GM12878 (cell line): ENCODE measurements at regions of chr18 and their contacts with region 1.

Region 1: GRCh38 chr18:36333414-36333813 is 35.9 kb downstream of the FHOD3 start:
- DNase-seq: no peak
- ATAC-seq: peak; percentile 26
- H3K4me3 ChIP-seq: no peak overlapping the region
- H3K27ac ChIP-seq: no peak overlapping the region
- H3K4me1 ChIP-seq: peaks cover 10% of the 10 kb centered on the region
- H3K27me3 ChIP-seq: no peaks in the 10 kb centered on the region
- CTCF ChIP-seq: no peak
- EP300 ChIP-seq: no peak
- POLR2A ChIP-seq: no peak
- RAD21 ChIP-seq: no peak

Region 2: DNA sequence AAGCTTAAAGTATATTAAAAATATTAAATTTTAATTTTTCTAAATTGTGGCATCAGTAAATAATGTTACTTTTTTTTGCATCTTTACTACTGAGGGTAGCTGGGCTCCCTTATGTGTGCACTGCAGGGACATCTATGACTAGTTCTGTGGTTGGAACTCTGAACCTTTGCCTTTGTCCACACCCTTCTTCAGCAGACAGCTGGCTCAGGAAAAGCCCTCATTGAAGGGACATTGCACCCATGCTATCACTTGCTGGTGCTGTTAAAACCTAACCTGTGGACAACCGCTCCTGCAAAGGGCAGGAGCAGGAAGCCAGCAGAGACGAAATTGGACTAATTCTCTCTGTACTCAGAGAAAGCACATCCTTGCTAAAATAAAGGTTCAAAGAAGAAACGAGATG is 116.1 kb before region 1 on chr18:
- CTCF ChIA-PET with region 1: no interaction called
- POLR2A ChIA-PET with region 1: no interaction called
- RAD21 ChIA-PET with region 1: no interaction called
- SMC1A ChIA-PET with region 1: no interaction called
- in situ Hi-C with region 1: no loop called
- intact Hi-C with region 1: no loop called
- DNase-seq: no peak
- ATAC-seq: no peak
- H3K4me3 ChIP-seq: no peak overlapping the region
- H3K27ac ChIP-seq: no peak overlapping the region
- H3K4me1 ChIP-seq: no peaks in the 10 kb centered on the region
- H3K27me3 ChIP-seq: no peaks in the 10 kb centered on the region
- CTCF ChIP-seq: no peak
- EP300 ChIP-seq: no peak
- POLR2A ChIP-seq: no peak
- RAD21 ChIP-seq: no peak

Region 3: GRCh38 chr18:36302676-36303075 is 30.7 kb before region 1 on chr18:
- CTCF ChIA-PET with region 1: interaction called, 10 read pairs
- POLR2A ChIA-PET with region 1: interaction called, 11 read pairs
- RAD21 ChIA-PET with region 1: interaction called, 126 read pairs
- SMC1A ChIA-PET with region 1: interaction called, 125 read pairs
- in situ Hi-C with region 1: no loop called
- intact Hi-C with region 1: no loop called
- DNase-seq: no peak
- ATAC-seq: no peak
- H3K4me3 ChIP-seq: no peak overlapping the region
- H3K27ac ChIP-seq: no peak overlapping the region
- H3K4me1 ChIP-seq: no peaks in the 10 kb centered on the region
- H3K27me3 ChIP-seq: peaks cover 0 to 6% of the 10 kb centered on the region in 2 experiments; a peak in 2 of 4 replicates
- CTCF ChIP-seq: no peak
- EP300 ChIP-seq: no peak
- POLR2A ChIP-seq: no peak
- RAD21 ChIP-seq: no peak

Region 4: GRCh38 chr18:36309436-36310391 is 23.7 kb before region 1 on chr18:
- CTCF ChIA-PET with region 1: interaction called, 4 read pairs
- POLR2A ChIA-PET with region 1: interaction called, 4 read pairs
- RAD21 ChIA-PET with region 1: interaction called, 126 read pairs
- SMC1A ChIA-PET with region 1: interaction called, 125 read pairs
- in situ Hi-C with region 1: no loop called
- intact Hi-C with region 1: no loop called
- DNase-seq: no peak
- ATAC-seq: peak; percentile 34
- H3K4me3 ChIP-seq: no peak overlapping the region
- H3K27ac ChIP-seq: no peak overlapping the region
- H3K4me1 ChIP-seq: no peaks in the 10 kb centered on the region
- H3K27me3 ChIP-seq: 0 out of 4 replicates have a peak, but pooled peaks cover 0 to under 1% of the 10 kb centered on the region in 2 experiments
- CTCF ChIP-seq: no peak
- EP300 ChIP-seq: no peak
- POLR2A ChIP-seq: no peak
- RAD21 ChIP-seq: no peak

Region 5: DNA sequence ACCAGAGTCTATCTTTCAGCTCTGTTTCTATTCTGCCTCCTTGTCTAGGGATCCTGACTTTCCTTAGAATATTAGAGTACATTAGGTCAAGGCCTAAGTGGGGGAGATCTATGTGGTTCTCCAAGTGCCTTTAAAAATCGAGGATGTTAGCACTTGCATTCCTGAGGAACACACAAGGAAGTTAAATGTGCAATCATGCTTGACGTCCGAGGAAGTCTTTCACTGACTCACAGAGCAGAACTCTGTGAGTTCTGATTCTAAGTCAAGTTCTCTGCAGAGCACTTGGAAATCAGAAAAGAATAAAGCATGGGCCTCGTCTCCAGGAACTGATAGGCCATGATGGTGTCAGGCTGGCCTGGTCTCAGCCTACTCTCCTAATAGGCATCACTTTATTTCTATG is 18.7 kb before region 1 on chr18:
- CTCF ChIA-PET with region 1: interaction called, 4 read pairs
- POLR2A ChIA-PET with region 1: interaction called, 3 read pairs
- RAD21 ChIA-PET with region 1: interaction called, 126 read pairs
- SMC1A ChIA-PET with region 1: interaction called, 11 read pairs
- in situ Hi-C with region 1: no loop called
- intact Hi-C with region 1: no loop called
- DNase-seq: no peak
- ATAC-seq: peak; percentile 22
- H3K4me3 ChIP-seq: no peak overlapping the region
- H3K27ac ChIP-seq: no peak overlapping the region
- H3K4me1 ChIP-seq: no peaks in the 10 kb centered on the region
- H3K27me3 ChIP-seq: no peaks in the 10 kb centered on the region
- CTCF ChIP-seq: no peak
- EP300 ChIP-seq: no peak
- POLR2A ChIP-seq: no peak
- RAD21 ChIP-seq: no peak

Region 6: DNA sequence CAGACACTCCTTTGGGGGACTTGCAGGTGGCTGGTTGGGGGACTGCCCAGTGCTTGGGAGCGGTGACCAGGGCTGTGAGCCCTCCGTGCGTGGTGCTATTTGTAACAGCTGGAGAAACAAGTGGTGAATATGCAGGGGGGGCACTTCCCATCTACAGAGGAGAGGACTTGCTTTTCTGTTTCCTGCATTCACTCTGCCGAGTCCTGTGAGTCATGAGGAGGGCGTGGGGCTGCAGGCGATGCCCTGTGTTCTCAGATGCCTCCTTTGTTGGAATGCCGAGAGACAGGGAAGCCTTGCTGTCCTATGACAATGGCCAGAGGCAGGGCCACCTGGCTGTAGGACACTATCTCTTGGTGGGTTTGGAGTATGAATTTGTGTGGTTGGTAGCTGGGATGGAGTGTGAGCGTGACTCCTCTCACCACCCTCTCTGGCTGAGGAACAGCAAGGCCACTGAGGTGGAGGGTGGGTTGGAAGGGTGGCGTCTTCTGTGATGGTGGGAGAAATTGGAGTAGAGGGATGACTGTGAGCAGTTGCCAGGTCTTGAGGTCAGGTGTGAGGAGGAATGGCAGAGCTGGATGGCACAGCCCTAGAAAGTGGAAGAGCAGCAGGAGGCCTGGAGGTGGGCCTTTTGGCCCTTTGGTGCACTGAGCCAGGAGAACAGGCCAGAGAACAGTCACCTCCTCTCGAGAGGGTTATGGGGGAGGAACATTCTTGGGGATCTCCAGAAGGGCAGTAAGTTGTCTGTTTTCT is 11.6 kb before region 1 on chr18:
- CTCF ChIA-PET with region 1: interaction called, 7 read pairs
- POLR2A ChIA-PET with region 1: interaction called, 21 read pairs
- RAD21 ChIA-PET with region 1: interaction called, 10 read pairs
- SMC1A ChIA-PET with region 1: interaction called, 27 read pairs
- in situ Hi-C with region 1: no loop called
- intact Hi-C with region 1: no loop called
- DNase-seq: no peak
- ATAC-seq: peak; percentile 60
- H3K4me3 ChIP-seq: no peak overlapping the region
- H3K27ac ChIP-seq: no peak overlapping the region
- H3K4me1 ChIP-seq: peaks cover 3% of the 10 kb centered on the region; the same call in 1 of the 2 replicates
- H3K27me3 ChIP-seq: peaks cover 0 to 4% of the 10 kb centered on the region in 2 experiments; a peak in 1 of 4 replicates
- CTCF ChIP-seq: no peak
- EP300 ChIP-seq: no peak
- POLR2A ChIP-seq: no peak
- RAD21 ChIP-seq: no peak

Region 7: DNA sequence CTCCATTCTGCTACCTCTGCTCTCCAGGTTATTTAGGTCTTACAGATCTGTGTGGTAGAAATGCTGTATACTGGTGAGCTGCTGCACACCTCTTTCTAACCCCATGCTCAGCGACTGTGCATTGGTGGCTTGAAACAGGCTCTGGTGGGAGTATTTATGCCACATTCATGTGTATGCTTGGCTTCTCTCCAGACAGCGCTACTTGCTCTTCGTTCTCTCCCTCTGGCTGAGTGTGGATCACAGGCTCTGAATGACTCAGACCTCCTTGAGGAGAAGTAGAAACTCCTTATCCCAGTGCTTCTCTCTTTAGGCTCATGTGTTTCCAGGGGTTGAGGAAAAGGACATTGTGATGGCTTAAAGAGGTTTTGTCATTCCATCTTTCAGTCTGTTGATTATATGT is 19.0 kb after region 1 on chr18:
- CTCF ChIA-PET with region 1: interaction called, 11 read pairs
- POLR2A ChIA-PET with region 1: interaction called, 34 read pairs
- RAD21 ChIA-PET with region 1: interaction called, 21 read pairs
- SMC1A ChIA-PET with region 1: interaction called, 28 read pairs
- in situ Hi-C with region 1: no loop called
- intact Hi-C with region 1: no loop called
- DNase-seq: no peak
- ATAC-seq: no peak
- H3K4me3 ChIP-seq: no peak overlapping the region
- H3K27ac ChIP-seq: no peak overlapping the region
- H3K4me1 ChIP-seq: peaks cover 5% of the 10 kb centered on the region; the same call in 1 of the 2 replicates
- H3K27me3 ChIP-seq: no peaks in the 10 kb centered on the region
- CTCF ChIP-seq: no peak
- EP300 ChIP-seq: no peak
- POLR2A ChIP-seq: no peak
- RAD21 ChIP-seq: no peak

Region 8: GRCh38 chr18:36358141-36358540 is 24.7 kb after region 1 on chr18:
- CTCF ChIA-PET with region 1: interaction called, 10 read pairs
- POLR2A ChIA-PET with region 1: interaction called, 9 read pairs
- RAD21 ChIA-PET with region 1: interaction called, 11 read pairs
- SMC1A ChIA-PET with region 1: interaction called, 67 read pairs
- in situ Hi-C with region 1: no loop called
- intact Hi-C with region 1: no loop called
- DNase-seq: no peak
- ATAC-seq: no peak
- H3K4me3 ChIP-seq: no peak overlapping the region
- H3K27ac ChIP-seq: no peak overlapping the region
- H3K4me1 ChIP-seq: peaks cover 12% of the 10 kb centered on the region
- H3K27me3 ChIP-seq: no peaks in the 10 kb centered on the region
- CTCF ChIP-seq: no peak
- EP300 ChIP-seq: no peak
- POLR2A ChIP-seq: no peak
- RAD21 ChIP-seq: no peak